ENCODE measurements at regions of chr1 and their contacts with region 1.

Region 1: DNA sequence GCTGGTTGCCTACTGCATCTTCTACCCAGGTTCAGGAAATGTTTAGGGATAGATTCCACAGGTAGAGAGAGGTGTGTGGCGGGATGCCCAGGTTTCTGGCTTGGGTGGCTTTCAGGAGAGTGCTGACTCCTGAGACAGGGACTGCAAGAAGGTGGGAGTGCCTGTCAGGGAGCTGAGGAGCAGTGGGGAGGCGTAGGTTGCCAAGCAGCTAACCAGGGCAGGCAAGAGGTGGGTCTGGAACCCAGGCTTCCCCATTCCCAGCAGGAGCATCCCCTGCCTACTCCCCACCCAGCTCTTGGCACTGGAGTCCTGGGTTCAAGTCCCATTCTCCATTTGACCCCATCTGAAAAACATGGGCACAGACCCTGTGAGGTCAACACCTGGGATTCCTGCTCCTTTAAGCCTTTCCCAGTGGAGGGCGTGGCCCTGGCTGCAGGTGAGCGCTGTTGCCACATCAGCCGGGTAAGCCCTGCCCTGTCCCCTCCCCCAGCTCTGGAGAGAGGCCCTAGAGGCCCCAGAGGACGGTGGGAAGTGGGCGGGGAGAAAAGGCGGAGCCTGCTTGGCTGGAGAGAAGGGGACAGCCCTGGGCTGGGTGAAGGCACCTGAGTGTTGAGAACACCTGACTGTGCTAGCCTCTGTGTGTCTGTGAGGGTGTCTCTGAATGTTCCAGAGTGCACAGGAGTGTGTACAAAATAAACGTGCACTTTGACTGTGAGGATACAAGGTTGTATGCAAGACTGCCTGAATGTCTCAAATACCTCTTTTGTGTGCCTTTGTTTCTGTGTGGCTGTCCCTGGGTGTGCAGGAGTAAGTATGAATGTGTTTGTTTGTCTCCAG is 14.0 kb upstream of the SYNC start:
- DNase-seq: no peak

Region 2: DNA sequence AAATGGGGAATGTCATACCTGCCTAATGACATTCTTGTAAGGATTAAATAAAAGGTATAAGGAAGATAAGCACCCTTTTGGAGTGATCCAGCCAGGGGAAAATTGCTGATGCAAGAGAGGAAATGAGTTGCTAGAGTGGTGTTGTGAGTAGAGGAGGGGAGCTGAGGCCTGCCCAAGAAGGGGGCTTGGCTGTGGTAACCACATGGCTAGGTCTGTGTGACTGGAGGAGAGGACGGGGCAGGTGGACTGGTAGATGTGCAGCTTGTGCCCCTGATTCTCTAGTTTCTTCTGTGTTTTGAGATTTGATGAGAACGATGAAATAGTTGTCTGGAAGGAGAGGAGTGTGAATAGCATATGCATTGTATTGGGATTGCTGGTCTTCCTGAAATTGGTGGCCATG is 530.5 kb before region 1 on chr1:
- intact Hi-C with region 1: no loop called
- DNase-seq: peak; percentile 10

Region 3: GRCh38 chr1:32754313-32755097 is 38.0 kb after region 1 on chr1:
- intact Hi-C with region 1: loop called in 1 of 2 experiments (anchors 5 kb)
- DNase-seq: no peak

Region 4: GRCh38 chr1:32773018-32773763 is 56.7 kb after region 1 on chr1:
- intact Hi-C with region 1: loop called (anchors 5 kb)
- DNase-seq: peak; percentile 93

Region 5: DNA sequence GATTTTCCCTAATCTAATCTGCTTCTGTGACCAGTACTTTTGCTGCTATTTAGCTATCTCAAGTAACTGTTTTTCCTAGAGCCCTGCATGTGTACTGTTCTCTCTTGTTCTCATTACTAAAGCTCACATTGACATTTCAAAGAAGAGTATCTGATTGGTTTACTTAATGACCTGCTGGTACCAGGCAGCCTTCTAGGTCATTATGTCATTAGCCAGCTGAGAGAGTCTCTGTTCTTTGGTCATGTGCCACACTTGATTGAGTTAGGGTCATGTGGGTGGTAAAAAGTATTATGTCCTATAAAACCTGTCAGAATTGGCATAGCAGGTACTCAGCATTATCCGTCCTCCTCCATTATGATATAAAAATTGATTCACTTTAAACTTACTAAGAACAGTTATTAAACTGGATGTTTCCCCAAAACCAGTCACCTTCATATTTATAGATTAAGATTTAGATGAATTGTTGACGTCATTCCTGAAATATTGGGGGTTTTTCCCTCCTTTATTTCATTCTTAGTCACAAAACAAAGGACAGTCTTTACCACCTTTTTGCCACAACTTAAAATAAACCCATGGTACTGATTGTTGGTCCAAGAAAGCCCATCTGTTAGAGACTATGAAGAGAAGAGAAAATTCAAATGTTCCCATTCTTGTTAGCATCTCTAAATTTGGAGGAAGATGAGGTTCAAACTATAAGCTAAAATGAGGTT is 132.0 kb after region 1 on chr1:
- intact Hi-C with region 1: no loop called
- DNase-seq: no peak

Region 6: GRCh38 chr1:32870615-32871363 is 154.3 kb after region 1 on chr1 and contains the start of gene FNDC5:
- intact Hi-C with region 1: loop called in 1 of 2 experiments (anchors 5 kb)
- DNase-seq: peak; percentile 79
- total RNA-seq, gene FNDC5: 2.4 to 5.0 TPM